ENCODE measurements at regions of chr7 and their contacts with region 1.

Region 1: DNA sequence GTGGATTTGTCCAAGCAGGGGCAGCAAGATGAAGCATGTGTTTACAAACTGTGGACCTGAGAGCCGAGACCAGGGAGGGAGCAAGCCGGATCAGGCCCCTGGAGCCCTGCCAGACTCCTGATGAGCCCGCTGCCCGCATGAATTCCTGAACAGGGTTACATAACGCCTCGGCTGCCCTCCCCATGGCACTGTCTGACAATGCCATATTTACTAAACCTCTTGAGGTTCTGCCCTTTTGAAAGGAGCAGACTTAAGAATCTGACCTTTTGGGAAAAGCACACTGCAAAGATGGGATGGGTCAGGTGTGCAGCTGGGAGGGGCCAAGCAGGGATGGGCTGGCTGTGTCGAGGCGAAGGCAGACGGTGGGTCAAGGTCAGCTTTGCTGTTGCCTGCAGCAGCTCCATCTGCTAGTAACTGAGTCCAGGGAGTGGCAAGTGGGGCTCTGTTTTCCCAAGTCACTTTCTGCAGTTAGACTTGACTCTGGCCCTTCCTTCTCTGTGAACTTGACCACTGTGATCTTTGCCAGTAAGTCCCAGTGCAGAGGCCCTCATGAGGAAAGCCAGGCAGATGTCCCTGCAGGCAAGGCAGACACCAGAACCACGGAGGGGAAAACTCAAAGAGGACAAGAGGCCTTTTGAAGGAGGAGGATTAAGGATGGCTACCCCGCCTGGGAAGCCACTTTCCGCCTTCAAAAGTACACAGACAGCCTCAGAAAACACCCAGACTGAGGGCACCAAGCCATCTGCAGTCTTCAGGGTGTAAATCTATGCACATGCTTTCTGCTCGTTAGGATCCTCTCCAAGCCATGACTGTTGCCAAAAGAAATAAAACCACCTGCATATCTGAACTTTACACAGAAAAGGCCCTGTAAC is 175.8 kb downstream of the TNS3 start:
- DNase-seq: peak; percentile 62 to 84 (median 70)
- H3K4me3 ChIP-seq: no peak overlapping the region
- H3K27ac ChIP-seq: peak overlapping the region; percentile 26 to 75
- H3K4me1 ChIP-seq: peaks cover 42% of the 10 kb centered on the region
- H3K27me3 ChIP-seq: no peaks in the 10 kb centered on the region
- CTCF ChIP-seq: no peak
- EP300 ChIP-seq: no peak
- POLR2A ChIP-seq: no peak

Region 2: DNA sequence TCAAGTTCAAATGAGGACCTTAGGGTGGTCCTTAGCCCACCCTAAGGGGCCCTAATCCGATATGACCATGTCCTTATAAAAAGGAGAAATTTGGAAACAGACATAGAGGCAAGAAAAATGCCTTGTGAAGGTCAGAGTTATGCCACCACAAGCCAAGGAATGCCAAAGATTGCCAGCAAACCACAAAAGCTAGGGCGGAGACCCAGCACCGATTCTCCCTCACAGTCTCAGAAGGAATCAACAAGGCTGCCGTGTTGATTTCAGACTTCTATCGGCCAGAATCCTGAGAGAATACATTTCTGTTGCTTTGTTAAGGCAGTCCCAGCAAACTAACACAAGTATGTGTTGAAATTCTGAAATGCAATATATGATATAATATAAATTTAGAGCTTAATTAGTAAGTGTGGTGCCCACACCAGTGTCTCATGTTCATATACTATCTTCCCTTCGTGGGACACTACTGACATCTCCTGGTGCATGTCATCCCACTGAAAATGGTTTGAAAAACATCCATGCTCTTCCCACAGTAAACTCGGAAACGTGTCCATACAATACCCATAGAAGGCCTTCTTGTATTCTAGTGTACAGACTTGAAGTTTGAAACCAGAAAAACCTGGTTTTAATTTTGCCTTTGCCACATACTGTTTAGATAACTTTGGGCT is 173.3 kb before region 1 on chr7:
- intact Hi-C with region 1: no loop called
- DNase-seq: no peak
- H3K4me3 ChIP-seq: no peak overlapping the region
- H3K27ac ChIP-seq: no peak overlapping the region
- H3K4me1 ChIP-seq: peaks cover 2% of the 10 kb centered on the region
- H3K27me3 ChIP-seq: no peaks in the 10 kb centered on the region
- CTCF ChIP-seq: no peak
- EP300 ChIP-seq: no peak
- POLR2A ChIP-seq: no peak

Region 3: DNA sequence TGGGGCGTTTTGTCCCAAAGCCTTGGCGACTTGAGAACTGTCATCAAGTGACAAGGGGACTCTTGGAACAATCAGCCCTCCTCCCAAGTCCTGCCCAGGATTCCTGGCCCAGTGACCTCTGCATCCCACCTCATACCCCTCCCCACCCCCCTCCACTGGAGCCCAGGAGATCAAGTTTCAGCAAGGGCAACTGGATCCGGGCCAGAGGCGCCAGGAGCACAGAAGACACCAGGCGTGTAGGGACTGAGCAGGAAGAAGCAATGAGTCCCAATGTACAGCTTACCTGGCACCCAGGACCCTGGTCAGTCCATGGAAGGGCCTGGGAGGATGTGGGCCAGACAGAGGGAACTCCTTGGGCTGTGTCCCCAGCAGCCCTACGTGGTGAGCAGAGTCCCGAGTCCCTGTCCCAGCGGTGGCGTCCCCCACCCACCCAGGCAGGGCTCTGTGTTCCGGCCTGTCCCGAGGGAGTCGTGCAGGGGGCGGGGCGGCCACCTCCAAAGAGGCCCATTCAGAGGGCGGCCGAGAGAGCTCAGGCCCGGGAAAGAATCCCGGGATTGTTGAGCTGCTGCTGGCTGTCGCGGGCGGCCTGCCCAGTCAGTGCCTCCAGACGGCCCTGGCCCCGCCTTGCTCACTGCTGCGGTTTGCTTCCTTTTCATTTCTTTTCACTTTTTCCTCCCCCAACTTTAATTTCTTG is 78.3 kb before region 1 on chr7:
- intact Hi-C with region 1: loop called in 1 of 4 experiments (anchors 10 kb)
- DNase-seq: peak; percentile 85 to 92 (median 87)
- H3K4me3 ChIP-seq: peak overlapping the region; percentile 0
- H3K27ac ChIP-seq: peak overlapping the region; percentile 60 to 81
- H3K4me1 ChIP-seq: peaks cover 23% of the 10 kb centered on the region
- H3K27me3 ChIP-seq: no peaks in the 10 kb centered on the region
- CTCF ChIP-seq: no peak
- EP300 ChIP-seq: no peak
- POLR2A ChIP-seq: no peak

Region 4: GRCh38 chr7:47351233-47352154 is 54.7 kb before region 1 on chr7:
- intact Hi-C with region 1: no loop called
- DNase-seq: no peak
- H3K4me3 ChIP-seq: no peak overlapping the region
- H3K27ac ChIP-seq: no peak overlapping the region
- H3K4me1 ChIP-seq: peaks cover 7% of the 10 kb centered on the region
- H3K27me3 ChIP-seq: no peaks in the 10 kb centered on the region
- CTCF ChIP-seq: no peak
- EP300 ChIP-seq: no peak
- POLR2A ChIP-seq: no peak

Measured in ovary (tissue), 10 donors.